ENCODE measurements at regions of chr1 and their contacts with region 1.

Region 1: DNA sequence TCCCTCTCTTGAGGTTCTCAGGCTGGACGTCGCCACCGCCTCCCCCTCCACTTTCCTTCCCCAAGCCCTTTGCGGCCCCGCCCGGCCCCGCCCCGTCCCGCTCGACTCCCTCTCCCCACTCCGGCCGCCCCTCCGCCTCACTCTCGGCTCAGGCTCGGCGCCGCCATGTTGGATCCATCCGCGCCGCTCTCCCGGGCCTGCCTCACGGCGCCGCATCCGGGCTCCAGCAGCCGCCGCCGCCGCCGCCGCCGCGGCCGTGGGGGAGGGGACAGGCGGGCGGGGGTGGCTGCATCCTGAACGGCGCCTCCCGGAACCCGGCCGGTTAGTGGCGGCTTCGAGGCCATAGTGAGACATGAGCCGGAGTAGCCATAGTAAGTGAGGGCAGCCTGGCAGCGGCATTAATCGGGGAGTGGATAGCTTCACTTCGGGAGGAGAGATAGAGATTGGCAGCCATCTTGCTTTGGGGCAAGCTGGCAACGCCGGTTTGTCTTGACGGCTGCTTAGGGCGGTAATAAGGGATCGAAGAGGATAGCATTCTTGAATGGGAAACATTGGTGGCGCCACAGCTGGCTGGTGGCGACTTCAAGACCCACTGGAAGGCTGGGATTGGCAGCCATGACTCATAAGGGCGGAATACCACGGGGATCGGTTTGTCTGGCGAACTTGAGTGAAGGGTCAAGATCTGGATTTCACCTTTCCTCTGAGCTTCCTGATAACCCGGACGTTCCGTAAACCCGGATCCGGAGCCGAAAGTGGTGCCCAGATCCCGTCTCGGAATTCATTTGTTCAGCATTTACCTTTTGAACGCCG is at the start of gene DEDD:
- DNase-seq: peak; percentile 98
- H3K4me3 ChIP-seq: peak within 1 kb of the TSS; percentile 69 to 83 (median 76)
- H3K27ac ChIP-seq: peak within 1 kb of the TSS; percentile 90 to 97 (median 92)
- H3K4me1 ChIP-seq: peaks cover 0 to 52% (median 41%) of the 10 kb centered on the region in 4 donors
- H3K27me3 ChIP-seq: no peaks in the 10 kb centered on the region
- CTCF ChIP-seq: no peak
- EP300 ChIP-seq: peak in 1 of 4 donors; percentile 56
- POLR2A ChIP-seq: no peak
- total RNA-seq, gene DEDD: 27.7 to 34.2 (median 30.2) TPM

Region 2: GRCh38 chr1:161159087-161159912 is 26.7 kb after region 1 on chr1 and contains the start of gene USP21:
- intact Hi-C with region 1: loop called (anchors 2 kb)
- DNase-seq: peak; percentile 96
- H3K4me3 ChIP-seq: peak within 1 kb of the TSS; percentile 82 to 97 (median 93)
- H3K27ac ChIP-seq: peak within 1 kb of the TSS; percentile 86 to 93 (median 90)
- H3K4me1 ChIP-seq: peaks cover 0 to 42% (median 39%) of the 10 kb centered on the region in 4 donors
- H3K27me3 ChIP-seq: no peaks in the 10 kb centered on the region
- CTCF ChIP-seq: peak in 2 of 4 experiments; percentile 17 to 32
- EP300 ChIP-seq: no peak
- POLR2A ChIP-seq: peak; percentile 47 to 52
- total RNA-seq, gene USP21: 11.4 to 24.1 (median 13.1) TPM

Region 3: DNA sequence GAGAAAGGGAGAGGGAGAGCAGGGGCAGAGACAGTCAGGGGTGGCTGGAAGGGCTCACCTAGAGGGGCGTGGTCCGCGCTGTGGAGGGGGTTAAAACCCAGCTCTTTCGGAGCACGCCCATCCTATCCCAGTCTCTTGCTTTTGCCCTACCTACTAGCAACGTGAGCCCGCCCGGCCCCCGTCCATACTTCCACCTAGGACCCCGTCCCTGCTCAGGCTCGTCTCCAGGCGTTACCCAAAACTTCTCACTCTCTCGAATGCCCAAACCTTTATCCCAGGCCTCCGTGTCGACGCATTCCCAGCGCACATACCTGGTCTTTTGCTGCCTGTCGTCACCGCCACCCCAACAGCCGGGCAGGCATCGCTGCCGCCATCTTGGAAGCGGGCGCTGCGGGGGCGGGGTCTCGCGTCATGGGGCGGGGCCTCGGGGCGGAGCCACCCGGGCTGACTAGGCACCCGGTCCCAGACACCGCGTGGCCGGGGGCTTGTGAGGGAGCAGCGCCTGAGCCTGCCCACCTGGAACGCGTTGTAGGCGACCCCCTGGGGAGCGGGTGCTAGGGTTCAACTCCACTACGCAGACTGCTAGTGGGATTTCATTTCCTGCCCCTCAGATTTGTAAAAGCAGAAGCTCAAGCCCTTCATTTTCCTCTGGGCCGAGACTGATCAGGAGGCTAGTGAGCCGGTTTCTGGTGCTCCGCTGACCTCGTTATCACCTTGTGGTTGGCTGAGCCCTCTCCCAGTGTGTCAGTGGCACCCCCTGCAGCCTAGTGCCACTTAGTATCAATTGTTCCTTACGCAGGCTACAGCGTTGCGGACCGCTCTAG is 44.7 kb after region 1 on chr1 and contains the start of gene B4GALT3:
- intact Hi-C with region 1: no loop called
- DNase-seq: peak; percentile 93
- H3K4me3 ChIP-seq: peak within 1 kb of the TSS; percentile 64 to 78 (median 76)
- H3K27ac ChIP-seq: peak within 1 kb of the TSS; percentile 85 to 92 (median 88)
- H3K4me1 ChIP-seq: peaks cover 0 to 38% (median 24%) of the 10 kb centered on the region in 4 donors
- H3K27me3 ChIP-seq: no peaks in the 10 kb centered on the region
- CTCF ChIP-seq: peak in 1 of 4 experiments; percentile 7
- EP300 ChIP-seq: no peak
- POLR2A ChIP-seq: peak; percentile 67 to 71
- total RNA-seq, gene B4GALT3: 10.7 to 19.3 (median 14.8) TPM